ENCODE measurements at regions of chr11 and their contacts with region 1.

Region 1: DNA sequence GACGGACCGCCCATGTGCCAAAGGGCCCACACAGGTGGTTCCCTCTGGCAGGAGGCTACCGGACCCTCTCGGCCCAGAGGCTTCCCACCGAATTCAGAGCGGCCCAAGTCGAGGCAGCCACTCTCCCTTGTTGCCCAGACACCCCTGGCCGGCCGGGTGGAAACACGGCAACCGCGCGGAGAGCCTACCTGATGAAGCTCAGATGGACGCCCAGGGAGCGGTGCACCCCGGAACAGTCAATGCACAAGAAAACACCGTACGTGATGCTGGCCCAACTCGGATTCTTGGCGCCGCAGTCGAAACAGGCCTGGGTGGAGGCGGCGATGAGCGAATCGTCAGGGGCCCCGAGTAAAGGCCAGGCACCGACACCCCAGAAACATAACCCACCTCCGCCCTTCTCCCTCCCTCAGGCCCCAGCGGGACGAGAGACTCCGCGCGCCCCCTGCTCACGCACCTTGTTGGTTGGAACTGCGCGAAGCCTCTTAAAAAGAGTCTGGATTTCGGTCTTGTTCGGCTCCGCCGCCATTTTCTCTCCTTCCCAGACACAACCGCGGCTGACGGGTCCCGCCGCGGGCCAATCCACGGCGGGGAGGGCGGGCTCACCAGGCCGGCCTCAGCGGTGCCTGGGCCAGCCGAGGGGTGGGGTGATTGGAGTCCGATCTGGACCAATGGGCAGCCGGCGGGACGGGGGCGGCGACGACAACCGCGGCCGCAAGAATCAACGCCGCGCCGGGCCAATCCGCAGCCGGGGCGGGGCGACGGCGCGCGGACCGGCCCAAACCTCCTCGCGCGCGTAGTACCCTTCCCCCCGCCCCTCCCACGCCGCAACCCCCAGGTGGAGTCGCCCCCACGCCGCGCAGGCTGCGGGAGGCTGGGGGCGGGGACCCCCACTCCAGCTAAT is at the start of gene ARFGAP2:
- DNase-seq: peak; percentile 97
- H3K4me3 Mint-ChIP-seq: peak within 1 kb of the TSS; percentile 92
- H3K27ac Mint-ChIP-seq: peak within 1 kb of the TSS; percentile 100
- H3K4me1 Mint-ChIP-seq: peaks cover 58% of the 10 kb centered on the region
- H3K27me3 Mint-ChIP-seq: no peaks in the 10 kb centered on the region
- total RNA-seq, gene ARFGAP2: 88.1 to 103 TPM

Region 2: GRCh38 chr11:47123094-47123493 is 53.5 kb before region 1 on chr11:
- CTCF ChIA-PET with region 1: no interaction called
- POLR2A ChIA-PET with region 1: no interaction called
- DNase-seq: no peak
- H3K4me3 Mint-ChIP-seq: no peak overlapping the region
- H3K27ac Mint-ChIP-seq: no peak overlapping the region
- H3K4me1 Mint-ChIP-seq: peaks cover 2% of the 10 kb centered on the region
- H3K27me3 Mint-ChIP-seq: no peaks in the 10 kb centered on the region

Region 3: GRCh38 chr11:47136327-47136726 is 40.3 kb before region 1 on chr11:
- CTCF ChIA-PET with region 1: no interaction called
- POLR2A ChIA-PET with region 1: no interaction called
- DNase-seq: no peak
- H3K4me3 Mint-ChIP-seq: no peak overlapping the region
- H3K27ac Mint-ChIP-seq: no peak overlapping the region
- H3K4me1 Mint-ChIP-seq: peaks cover 5% of the 10 kb centered on the region
- H3K27me3 Mint-ChIP-seq: no peaks in the 10 kb centered on the region

Region 4: DNA sequence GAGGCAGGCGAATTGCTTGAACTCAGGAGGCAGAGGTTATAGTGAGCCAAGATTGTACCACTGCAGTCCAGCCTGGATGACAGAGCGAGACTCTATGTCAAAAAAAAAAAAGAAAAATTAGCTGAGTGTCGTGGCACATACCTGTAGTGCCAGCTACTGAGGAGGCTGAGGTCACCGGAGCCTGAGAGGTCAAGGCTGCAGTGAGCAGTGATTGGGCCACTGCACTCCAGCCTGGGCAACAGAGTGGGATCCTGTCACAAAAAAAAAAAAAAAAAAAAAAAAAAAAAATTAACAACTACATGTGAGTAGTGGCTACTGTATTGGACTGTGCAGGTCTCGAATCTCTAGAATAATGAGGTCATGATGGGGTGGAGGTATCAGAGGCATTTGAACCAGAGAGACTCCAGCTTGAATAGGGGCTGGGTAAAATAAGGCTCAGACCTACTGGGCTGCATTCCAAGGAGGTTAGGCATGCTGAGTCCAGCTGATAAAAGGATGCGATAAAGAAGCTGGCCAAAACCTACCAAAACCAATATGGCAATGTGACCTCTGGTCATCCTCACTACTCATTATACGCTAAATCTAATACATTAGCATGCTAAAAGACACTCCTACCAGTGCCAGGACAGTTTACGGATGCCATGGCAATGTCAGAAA is 15.4 kb after region 1 on chr11:
- CTCF ChIA-PET with region 1: interaction called, 18 read pairs
- POLR2A ChIA-PET with region 1: no interaction called
- DNase-seq: no peak
- H3K4me3 Mint-ChIP-seq: no peak overlapping the region
- H3K27ac Mint-ChIP-seq: no peak overlapping the region
- H3K4me1 Mint-ChIP-seq: peaks cover 7% of the 10 kb centered on the region
- H3K27me3 Mint-ChIP-seq: peaks cover 33% of the 10 kb centered on the region

Region 5: DNA sequence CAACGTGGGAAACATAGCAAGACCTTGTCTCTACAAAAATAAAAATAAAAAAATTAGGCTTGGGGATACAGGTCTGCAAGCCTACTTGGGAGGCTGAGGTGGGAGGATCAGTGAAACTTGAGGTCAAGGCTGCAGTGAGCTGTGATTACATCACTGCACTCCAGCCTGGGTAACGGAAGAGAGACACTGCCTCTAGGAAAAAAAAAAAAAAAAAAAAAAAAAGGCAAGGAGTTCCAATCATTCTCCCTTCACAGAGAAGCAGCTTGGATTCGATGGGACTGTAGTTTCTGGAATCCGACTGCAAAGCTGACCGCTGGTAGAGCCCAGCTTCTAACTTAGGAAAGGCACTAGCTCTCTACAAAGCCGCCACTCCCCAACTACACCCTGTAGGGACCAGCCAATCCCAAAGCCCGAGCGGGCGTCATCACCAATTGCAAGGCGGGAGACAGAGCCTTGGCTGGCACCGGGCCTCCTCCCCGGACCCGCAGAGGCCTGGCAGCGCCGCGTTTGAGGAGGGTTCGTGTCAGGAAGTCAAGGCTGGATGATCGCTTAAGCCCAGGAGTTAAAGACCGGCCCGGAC is 37.5 kb after region 1 on chr11:
- CTCF ChIA-PET with region 1: interaction called, 18 read pairs
- POLR2A ChIA-PET with region 1: interaction called, 5 read pairs
- DNase-seq: peak; percentile 94
- H3K4me3 Mint-ChIP-seq: peak overlapping the region; percentile 100
- H3K27ac Mint-ChIP-seq: peak overlapping the region; percentile 100
- H3K4me1 Mint-ChIP-seq: peaks cover 27% of the 10 kb centered on the region
- H3K27me3 Mint-ChIP-seq: no peaks in the 10 kb centered on the region

Measured in activated CD4-positive, alpha-beta T cell treated with anti-CD3 and anti-CD28 coated beads, Interleukin-2, amount 10 ng/mL, durations not matched to agents 7 days and 5 days (primary cell).